WTC11 (cell line): ENCODE measurements at regions of chr3 and their contacts with region 1.

Region 1: DNA sequence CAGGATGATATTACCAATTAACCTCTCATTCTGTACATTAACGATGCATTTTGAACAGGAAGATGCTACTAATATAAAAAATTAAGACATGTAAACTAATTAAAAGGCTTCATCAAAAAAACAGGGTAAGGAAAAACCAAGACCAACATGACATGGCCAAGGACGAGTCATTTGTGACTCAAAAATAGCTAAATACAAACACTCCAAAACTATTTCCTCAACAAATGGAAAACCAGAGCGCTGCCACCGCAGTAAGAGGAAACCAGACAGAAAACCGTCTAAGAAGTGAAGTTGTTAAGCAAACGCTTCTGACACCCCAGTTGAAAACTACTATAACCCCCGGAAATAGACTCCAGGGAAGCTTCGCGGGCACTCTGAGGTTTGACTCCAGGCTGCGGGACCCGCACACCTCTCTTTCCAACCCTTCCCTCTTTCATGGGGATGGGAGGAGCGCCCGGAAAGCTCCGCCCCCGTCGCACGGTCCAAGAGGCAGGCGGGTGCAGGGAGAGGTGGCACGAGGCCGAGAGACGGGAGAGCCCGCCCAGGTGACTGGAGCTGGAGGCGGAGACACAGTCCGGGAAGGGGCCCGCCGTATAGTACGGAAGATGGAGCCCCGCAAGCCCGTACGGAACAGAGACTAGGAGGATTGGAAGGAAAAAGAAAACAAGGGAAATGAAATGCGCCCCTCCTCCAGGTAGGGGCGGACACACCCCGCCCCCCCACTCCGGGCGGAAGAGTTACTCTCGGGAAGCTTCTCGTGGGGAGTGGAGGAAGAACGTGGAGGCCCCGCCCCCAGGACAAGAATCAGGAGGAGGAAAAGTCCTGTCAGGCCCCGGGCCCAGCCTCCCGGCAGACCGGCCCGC is 708 bp downstream of the DCAF1 start:
- DNase-seq: peak; percentile 97
- ATAC-seq: peak; percentile 85
- H3K4me3 Mint-ChIP-seq: peak overlapping the region; percentile 94
- H3K27ac Mint-ChIP-seq: peak overlapping the region; percentile 97
- H3K4me1 Mint-ChIP-seq: 0 out of 2 replicates have a peak, but pooled peaks cover 5% of the 10 kb centered on the region
- H3K27me3 Mint-ChIP-seq: no peaks in the 10 kb centered on the region
- CTCF ChIP-seq: no peak

Region 2: DNA sequence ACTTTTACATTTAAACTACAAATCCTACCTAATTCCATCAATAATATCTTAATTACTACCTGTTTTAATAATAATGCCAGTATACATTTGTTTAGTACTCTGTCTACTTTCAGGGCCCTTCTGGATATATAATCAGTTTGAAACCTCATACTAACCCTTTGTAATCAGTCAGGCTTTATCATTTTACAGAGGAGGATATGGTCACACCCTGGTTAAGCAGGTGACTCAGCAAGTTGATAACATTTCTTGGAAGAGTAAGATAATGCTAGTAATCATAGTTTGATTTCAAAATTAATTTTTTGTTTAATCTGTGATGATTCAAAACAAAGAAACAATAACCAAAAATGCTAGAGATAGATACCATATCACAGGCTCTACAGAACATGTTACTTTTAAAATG is 322.2 kb before region 1 on chr3:
- CTCF ChIA-PET with region 1: no interaction called
- POLR2A ChIA-PET with region 1: no interaction called
- DNase-seq: no peak
- ATAC-seq: no peak
- H3K4me3 Mint-ChIP-seq: no peak overlapping the region
- H3K27ac Mint-ChIP-seq: no peak overlapping the region
- H3K4me1 Mint-ChIP-seq: no peaks in the 10 kb centered on the region
- H3K27me3 Mint-ChIP-seq: 0 out of 2 replicates have a peak, but pooled peaks cover 4% of the 10 kb centered on the region
- CTCF ChIP-seq: no peak

Region 3: DNA sequence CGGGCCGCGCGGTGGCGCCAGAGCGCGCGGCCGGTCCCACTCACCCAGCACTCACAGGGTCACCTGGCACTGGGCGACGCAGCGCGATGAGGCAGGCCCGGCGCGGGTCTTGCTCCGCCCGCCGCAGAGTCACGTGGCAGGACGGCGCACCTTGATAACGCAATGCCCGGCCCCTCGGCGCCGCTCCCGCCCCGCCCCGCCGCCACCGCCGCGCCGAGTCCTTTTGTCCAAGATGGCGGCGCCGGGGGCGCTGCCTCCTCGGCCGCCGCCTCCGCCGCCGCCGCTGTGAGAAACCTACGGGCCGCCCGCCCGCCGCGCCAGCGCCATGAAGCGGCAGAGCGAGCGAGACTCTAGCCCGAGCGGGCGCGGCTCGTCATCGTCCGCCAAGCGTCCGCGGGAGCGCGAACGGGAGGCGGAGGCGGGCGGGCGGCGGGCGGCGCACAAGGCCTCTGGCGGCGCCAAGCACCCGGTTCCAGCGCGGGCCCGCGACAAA is 108.0 kb before region 1 on chr3 and contains the start of gene RBM15B:
- CTCF ChIA-PET with region 1: interaction called, 15 read pairs
- POLR2A ChIA-PET with region 1: interaction called, 4 read pairs
- DNase-seq: peak; percentile 98
- ATAC-seq: peak; percentile 86
- H3K4me3 Mint-ChIP-seq: peak within 1 kb of the TSS; percentile 76
- H3K27ac Mint-ChIP-seq: peak within 1 kb of the TSS; percentile 86
- H3K4me1 Mint-ChIP-seq: peaks cover 54% of the 10 kb centered on the region
- H3K27me3 Mint-ChIP-seq: no peaks in the 10 kb centered on the region
- CTCF ChIP-seq: no peak; the same call in 1 of the 2 replicates
- total RNA-seq, gene RBM15B: 53.9 to 55.6 TPM (median 55.4 TPM) in 3 replicates

Region 4: DNA sequence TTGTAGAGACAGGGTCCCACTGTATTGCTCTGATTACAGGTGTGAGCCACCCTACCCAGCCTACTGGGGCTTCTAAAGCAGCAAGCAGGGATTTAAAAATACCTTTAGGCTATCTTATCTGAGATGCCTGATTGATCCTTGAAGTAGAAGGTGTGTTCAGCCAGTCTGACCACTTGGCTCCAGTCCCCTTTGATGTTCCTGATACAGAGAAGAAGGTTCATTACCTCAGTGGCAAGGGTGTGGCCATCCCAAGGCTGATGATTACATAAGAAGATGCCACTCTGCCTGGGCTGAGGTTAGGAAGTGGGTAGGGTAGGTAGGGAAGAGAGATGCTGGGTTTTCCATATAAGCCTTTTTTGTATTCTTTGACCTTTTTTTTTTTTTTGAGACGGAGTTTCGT is 11.9 kb after region 1 on chr3:
- CTCF ChIA-PET with region 1: interaction called, 10 read pairs
- POLR2A ChIA-PET with region 1: no interaction called
- DNase-seq: no peak
- ATAC-seq: no peak
- H3K4me3 Mint-ChIP-seq: no peak overlapping the region
- H3K27ac Mint-ChIP-seq: no peak overlapping the region
- H3K4me1 Mint-ChIP-seq: no peaks in the 10 kb centered on the region
- H3K27me3 Mint-ChIP-seq: no peaks in the 10 kb centered on the region
- CTCF ChIP-seq: no peak

Region 5: GRCh38 chr3:51538459-51539290 is 39.6 kb after region 1 on chr3 and contains the start of gene RAD54L2:
- CTCF ChIA-PET with region 1: interaction called, 33 read pairs
- POLR2A ChIA-PET with region 1: interaction called, 4 read pairs
- DNase-seq: peak; percentile 85
- ATAC-seq: peak; percentile 82
- H3K4me3 Mint-ChIP-seq: peak within 1 kb of the TSS; percentile 89
- H3K27ac Mint-ChIP-seq: peak within 1 kb of the TSS; percentile 75
- H3K4me1 Mint-ChIP-seq: peaks cover 15% of the 10 kb centered on the region
- H3K27me3 Mint-ChIP-seq: no peaks in the 10 kb centered on the region
- CTCF ChIP-seq: no peak
- total RNA-seq, gene RAD54L2: 29.5 to 32.3 TPM (median 30.9 TPM) in 3 replicates

Region 6: DNA sequence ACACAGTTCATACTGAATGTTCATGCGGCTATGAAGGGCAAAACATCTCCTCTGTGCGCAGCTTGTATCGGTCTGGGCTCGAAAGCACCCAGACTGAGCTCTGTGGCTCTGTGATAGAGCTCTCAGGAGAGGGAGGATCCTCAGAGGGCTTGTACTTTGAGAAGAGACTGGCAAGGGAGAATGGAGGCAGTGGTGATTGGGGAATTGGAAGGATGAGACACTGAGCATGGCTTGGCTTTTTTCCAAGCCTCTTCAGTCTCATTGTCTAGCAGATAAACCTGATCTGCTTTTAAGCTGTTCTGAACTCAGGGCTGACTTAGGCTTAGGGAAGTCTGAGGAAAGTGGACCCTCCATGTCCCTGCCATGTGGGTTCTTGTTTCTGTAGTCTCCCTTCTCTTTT is 82.4 kb after region 1 on chr3:
- CTCF ChIA-PET with region 1: interaction called, 13 read pairs
- POLR2A ChIA-PET with region 1: no interaction called
- DNase-seq: no peak
- ATAC-seq: peak; percentile 48
- H3K4me3 Mint-ChIP-seq: no peak overlapping the region
- H3K27ac Mint-ChIP-seq: peak overlapping the region; percentile 96
- H3K4me1 Mint-ChIP-seq: peaks cover 34% of the 10 kb centered on the region
- H3K27me3 Mint-ChIP-seq: no peaks in the 10 kb centered on the region
- CTCF ChIP-seq: no peak

Region 7: DNA sequence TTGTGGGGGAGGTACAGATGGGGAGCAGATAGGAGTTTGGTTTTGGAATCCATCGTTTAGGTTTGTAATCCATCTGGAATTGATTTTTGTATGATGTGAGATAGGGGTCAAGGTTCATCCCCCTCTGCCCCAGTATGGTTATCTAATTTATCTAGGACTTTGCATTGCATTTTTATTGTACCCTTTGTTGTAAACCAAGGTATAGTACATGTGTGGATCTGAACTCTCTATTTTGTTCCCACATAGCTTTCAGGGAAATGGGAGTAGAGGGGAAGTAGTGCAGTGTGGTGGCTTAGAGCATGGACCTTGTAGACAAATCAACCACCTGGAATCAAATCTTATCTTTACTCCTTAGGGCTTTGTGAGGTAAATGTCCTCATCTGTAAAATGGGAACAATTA is 105.1 kb after region 1 on chr3:
- CTCF ChIA-PET with region 1: no interaction called
- POLR2A ChIA-PET with region 1: no interaction called
- DNase-seq: no peak
- ATAC-seq: no peak
- H3K4me3 Mint-ChIP-seq: no peak overlapping the region
- H3K27ac Mint-ChIP-seq: no peak overlapping the region
- H3K4me1 Mint-ChIP-seq: peaks cover 8% of the 10 kb centered on the region
- H3K27me3 Mint-ChIP-seq: no peaks in the 10 kb centered on the region
- CTCF ChIP-seq: no peak

Region 8: DNA sequence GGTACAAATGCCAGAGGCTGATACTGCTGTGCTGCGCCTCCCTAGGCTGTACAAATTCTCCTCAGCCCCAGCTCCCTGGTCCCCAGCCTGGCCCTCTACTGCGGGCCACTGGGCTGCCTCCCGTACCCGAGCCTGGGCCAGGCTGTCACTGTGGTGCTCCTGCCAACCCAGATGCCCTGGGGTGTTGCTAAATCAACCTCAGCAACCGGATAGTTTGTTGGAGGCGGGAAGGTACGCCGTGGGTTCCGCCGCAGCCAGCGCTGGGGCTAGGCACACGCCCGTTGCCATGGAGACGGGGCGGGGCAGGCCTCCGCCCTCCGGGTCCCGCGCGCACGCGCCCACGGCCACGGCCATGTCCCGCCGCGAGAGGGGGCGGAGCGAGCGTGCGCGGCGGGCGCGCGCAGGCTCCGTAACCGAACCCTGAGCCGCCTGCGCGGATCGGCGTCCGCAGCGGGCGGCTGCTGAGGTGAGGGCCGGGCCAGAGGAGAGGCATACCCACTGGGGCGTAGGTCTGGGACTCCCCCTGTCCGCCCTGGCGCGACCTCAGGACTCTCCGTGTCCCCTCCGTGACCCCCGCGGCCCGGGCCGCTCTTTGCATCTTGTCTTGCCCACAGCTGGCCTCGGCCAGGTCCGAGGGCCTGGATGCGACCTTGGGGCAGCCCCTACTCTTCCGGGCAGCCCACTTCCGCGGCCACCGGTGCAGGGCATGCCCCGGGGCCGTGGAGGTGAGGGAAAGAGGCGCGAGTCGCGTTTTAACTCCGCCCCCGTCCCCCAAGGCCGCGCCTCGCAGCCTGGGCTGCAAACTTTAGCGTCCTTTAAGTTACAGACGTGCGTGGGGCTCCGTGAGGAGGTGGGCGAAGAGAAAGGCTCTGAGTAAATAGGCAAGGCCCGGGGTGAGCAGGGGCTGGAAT is 172.0 kb after region 1 on chr3 and contains the start of gene TEX264:
- CTCF ChIA-PET with region 1: interaction called, 198 read pairs
- POLR2A ChIA-PET with region 1: interaction called, 10 read pairs
- DNase-seq: peak; percentile 58
- ATAC-seq: peak; percentile 28
- H3K4me3 Mint-ChIP-seq: peak within 1 kb of the TSS; percentile 75
- H3K27ac Mint-ChIP-seq: peak within 1 kb of the TSS; percentile 46
- H3K4me1 Mint-ChIP-seq: peaks cover 35% of the 10 kb centered on the region
- H3K27me3 Mint-ChIP-seq: no peaks in the 10 kb centered on the region; the same call in 1 of the 2 replicates
- CTCF ChIP-seq: no peak
- total RNA-seq, gene TEX264: 11.8 to 17.5 TPM (median 17.5 TPM) in 3 replicates